Caki2 (cell line): ENCODE measurements at regions of chr3 and their contacts with region 1.

Region 1: DNA sequence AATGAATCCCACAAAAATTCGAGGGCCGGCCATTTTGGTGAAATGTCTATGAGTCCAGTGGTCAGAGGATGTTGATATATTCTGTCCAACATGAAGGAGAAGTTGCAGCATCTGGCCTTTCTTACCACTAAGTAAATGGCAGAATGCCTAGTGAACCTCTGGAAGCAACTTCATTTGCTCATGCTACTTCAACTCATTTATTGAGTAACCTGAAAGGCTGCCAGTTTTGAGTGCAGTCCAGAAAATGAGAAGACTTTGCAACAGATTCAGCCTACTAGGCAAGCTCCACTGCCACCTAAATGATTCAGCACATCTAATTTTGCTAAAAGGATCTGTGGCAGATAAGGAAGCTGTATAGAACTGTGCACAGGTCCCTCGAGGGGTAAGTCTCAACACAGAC is 265.0 kb downstream of the OPA1 start:
- DNase-seq: no peak

Region 2: GRCh38 chr3:194315088-194315964 is 457.3 kb after region 1 on chr3:
- in situ Hi-C with region 1: loop called (anchors 10 kb)
- DNase-seq: peak; percentile 95

Region 3: DNA sequence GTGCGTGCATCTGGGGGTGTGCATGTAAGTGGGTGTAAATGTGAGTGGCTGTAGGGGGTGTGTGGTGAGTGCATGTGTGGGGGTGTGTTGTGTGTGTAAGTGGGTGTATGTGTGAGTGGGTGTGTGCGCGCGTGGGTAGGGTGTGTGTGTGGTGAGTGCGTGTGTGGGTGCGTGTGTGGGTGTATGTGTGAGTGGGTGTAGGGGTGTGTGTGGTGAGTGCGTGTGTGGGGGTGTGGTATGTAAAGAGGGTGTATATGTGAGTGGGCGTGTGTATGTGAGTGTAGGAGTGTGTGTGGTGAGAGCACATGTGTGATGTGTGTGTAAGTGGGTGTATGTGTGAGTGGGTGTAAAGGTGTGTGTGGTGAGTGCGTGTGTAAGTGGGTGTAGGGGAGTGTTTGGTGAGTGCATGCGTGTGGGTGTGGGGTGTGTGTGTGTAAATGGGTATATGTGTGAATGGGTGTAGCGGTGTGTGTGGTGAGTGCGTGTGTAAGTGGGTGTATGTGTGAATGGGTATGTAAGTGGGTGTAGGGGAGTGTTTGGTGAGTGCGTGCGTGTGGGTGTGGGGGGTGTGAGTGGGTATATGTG is 494.0 kb after region 1 on chr3:
- in situ Hi-C with region 1: no loop called
- DNase-seq: no peak